ENCODE measurements at regions of chr1 and their contacts with region 1.

Region 1: DNA sequence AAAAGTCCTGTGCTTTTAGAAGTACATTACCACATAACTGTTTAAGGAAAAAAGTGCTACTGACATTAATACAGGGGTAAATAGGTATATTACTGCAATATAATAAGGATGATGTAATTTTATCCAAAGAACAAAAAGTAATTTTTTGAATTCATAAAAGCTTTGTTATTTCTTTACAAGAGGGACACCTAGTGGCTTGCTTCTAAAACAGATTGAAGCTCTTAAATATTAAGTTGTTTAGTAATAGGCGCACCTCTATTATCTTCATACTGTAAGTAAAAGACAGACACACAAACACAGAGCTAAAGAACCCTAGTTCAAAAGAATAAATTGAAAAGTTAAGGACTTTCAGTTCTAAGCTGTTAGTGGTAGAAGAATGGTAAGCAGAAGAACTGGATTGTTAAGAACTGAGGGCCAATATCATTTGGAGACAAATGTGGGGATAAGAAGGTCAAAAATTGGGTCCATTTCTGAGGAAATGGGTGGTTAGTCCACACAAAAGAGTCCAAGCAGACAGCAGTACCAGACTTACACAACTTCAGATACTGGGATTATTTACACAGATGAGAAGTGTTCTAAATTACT is 15.4 kb downstream of the ZNHIT6 start:
- DNase-seq: peak in 1 of 2 experiments; percentile 45
- ATAC-seq: peak; percentile 43 to 61; a peak in 4 of 6 replicates
- H3K4me3 ChIP-seq: no peak overlapping the region
- H3K27ac ChIP-seq: peak overlapping the region; percentile 52 to 65
- H3K4me1 ChIP-seq: peaks cover 22% of the 10 kb centered on the region; the same call in 2 of the 3 replicates
- CTCF ChIP-seq: peak; percentile 64
- EP300 ChIP-seq: no peak
- POLR2A ChIP-seq: no peak
- RAD21 ChIP-seq: peak; percentile 65 to 82

Region 2: GRCh38 chr1:85464497-85465098 is 228.2 kb before region 1 on chr1:
- CTCF ChIA-PET with region 1: interaction called, 11 read pairs
- POLR2A ChIA-PET with region 1: no interaction called
- DNase-seq: peak; percentile 27 to 55
- ATAC-seq: peak; percentile 81 to 83
- H3K4me3 ChIP-seq: peak overlapping the region; percentile 70
- H3K27ac ChIP-seq: peak overlapping the region; percentile 89 to 98
- H3K4me1 ChIP-seq: peaks cover 33% of the 10 kb centered on the region
- CTCF ChIP-seq: no peak
- EP300 ChIP-seq: no peak
- POLR2A ChIP-seq: peak; percentile 24; the same call in 1 of the 2 replicates
- RAD21 ChIP-seq: no peak; a peak in 2 of 5 replicates

Region 3: GRCh38 chr1:85584264-85584781 is 108.5 kb before region 1 on chr1:
- CTCF ChIA-PET with region 1: interaction called, 17 read pairs
- POLR2A ChIA-PET with region 1: interaction called, 7 read pairs
- DNase-seq: peak in 1 of 2 experiments; percentile 69
- ATAC-seq: peak; percentile 2 to 5; a peak in 3 of 6 replicates
- H3K4me3 ChIP-seq: peak overlapping the region; percentile 83; the same call in 2 of the 3 replicates
- H3K27ac ChIP-seq: peak overlapping the region; percentile 99 to 100
- H3K4me1 ChIP-seq: peaks cover 44% of the 10 kb centered on the region
- CTCF ChIP-seq: no peak
- EP300 ChIP-seq: peak in 1 of 2 experiments; percentile 32; a peak in 1 of 5 replicates
- POLR2A ChIP-seq: no peak
- RAD21 ChIP-seq: 0 out of 5 replicates have a peak, but pooled peaks of 1 of the 2 experiments have one; percentile 11

Region 4: DNA sequence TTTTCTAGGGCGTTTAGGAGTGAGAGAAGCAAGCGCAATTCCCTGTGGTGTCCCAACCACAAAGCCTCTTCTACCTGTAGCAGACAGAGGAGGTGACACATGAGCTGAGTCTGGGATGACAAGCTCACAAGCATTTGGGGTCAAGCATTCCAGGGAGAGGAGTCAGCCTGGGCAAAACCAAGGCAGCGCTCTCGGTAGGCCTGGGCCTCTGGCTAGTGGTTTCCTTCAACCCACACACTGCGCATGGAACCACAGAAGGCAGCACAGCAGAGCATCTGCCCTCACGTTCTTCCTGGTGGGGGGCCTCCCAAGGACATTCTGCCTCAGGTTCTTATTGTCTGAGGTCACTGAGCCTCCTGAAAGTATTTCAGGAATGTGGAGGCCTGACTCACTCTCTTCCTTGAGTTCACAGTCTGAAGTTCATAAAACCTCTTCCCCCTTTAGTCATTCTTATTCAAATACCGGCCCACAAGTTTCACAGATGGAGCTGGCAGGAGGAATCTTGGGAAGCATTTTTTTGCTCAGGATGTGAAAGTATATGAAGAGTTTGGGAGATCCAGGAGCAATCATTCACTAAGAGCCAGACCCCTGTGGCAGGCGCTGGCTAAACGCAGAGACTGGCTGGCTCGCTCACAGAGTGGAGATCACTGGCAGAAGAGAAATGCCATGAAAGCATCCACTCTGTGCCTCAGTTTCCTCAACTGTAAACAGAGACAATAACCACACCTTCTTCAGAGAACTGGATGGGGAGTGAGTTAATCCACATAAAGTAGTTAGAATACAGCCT is 85.5 kb before region 1 on chr1:
- CTCF ChIA-PET with region 1: interaction called, 20 read pairs
- POLR2A ChIA-PET with region 1: no interaction called
- DNase-seq: peak; percentile 82 to 92
- ATAC-seq: peak; percentile 89 to 90
- H3K4me3 ChIP-seq: no peak overlapping the region
- H3K27ac ChIP-seq: peak overlapping the region; percentile 91 to 92
- H3K4me1 ChIP-seq: peaks cover 73% of the 10 kb centered on the region
- CTCF ChIP-seq: no peak
- EP300 ChIP-seq: peak; percentile 79 to 93; a peak in 4 of 5 replicates
- POLR2A ChIP-seq: no peak
- RAD21 ChIP-seq: peak; percentile 17 to 44; a peak in 3 of 5 replicates

Region 5: DNA sequence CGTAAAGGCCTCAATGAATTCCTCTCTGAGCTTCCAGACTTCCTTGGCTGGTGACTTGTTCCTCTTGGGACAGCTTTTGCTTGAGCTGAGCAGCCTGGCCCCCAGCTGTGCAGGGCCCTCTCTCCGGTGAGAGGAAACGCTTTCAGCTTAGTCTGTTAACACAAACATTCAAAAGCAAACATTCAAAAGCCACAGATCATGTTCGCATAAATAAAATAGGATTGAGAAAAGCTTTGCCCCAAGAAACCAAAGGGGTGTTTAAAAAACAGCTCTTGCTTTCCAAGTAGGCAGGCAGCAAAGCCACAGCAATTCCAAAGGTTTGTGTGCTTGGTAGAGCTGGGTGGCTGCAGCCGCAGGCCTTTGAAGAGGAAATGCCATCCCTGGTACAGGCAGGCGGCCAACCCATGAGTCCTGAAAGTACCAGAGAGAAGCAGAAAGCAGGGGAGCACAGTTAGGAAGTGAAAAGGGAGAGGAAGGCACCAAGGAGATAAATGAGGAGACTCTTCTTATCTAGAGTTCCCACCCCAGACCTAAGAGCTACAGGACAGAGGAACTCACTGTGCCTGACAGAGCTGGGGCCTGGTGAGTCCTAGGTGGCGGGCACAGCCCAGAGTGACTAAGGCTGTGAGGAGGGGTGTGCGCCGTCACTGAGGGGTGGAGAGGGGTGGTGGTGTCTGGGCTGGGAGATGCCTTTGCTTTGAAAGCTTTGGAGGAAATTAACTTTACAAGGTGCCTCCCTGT is 63.9 kb before region 1 on chr1:
- CTCF ChIA-PET with region 1: interaction called, 14 read pairs
- POLR2A ChIA-PET with region 1: interaction called, 3 read pairs
- DNase-seq: peak; percentile 73 to 89
- ATAC-seq: peak; percentile 98 to 99
- H3K4me3 ChIP-seq: peak overlapping the region; percentile 24; the same call in 1 of the 3 replicates
- H3K27ac ChIP-seq: peak overlapping the region; percentile 93 to 94
- H3K4me1 ChIP-seq: peaks cover 26% of the 10 kb centered on the region
- CTCF ChIP-seq: no peak
- EP300 ChIP-seq: no peak
- POLR2A ChIP-seq: no peak; the same call in 1 of the 2 replicates
- RAD21 ChIP-seq: peak; percentile 1 to 28; a peak in 4 of 5 replicates